ENCODE measurements at regions of chr1 and their contacts with region 1.

Region 1: DNA sequence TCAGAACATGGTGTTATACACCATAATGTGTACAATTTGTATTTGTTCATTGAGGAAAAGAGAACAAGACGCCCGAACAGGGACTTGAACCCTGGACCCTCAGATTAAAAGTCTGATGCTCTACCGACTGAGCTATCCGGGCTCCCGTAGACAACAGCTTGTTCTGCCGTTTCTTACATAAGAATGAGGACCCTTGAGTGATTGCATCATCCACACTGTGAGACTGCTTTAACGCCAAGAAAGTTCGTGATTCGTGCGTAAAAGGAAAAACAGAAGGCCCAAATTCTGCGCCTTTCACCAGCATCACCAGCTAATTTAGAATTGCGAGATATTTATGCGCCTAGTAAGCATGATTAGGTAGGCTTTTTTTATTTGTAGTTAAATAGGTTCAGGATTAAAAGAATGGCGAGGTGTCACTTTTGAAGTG is 9.2 kb upstream of the MDM4 start:
- DNase-seq: peak; percentile 94
- ATAC-seq: peak; percentile 82
- H3K4me3 Mint-ChIP-seq: peak overlapping the region; percentile 88
- H3K27ac Mint-ChIP-seq: peak overlapping the region; percentile 97
- H3K4me1 Mint-ChIP-seq: peaks cover 42% of the 10 kb centered on the region
- H3K27me3 Mint-ChIP-seq: no peaks in the 10 kb centered on the region

Region 2: DNA sequence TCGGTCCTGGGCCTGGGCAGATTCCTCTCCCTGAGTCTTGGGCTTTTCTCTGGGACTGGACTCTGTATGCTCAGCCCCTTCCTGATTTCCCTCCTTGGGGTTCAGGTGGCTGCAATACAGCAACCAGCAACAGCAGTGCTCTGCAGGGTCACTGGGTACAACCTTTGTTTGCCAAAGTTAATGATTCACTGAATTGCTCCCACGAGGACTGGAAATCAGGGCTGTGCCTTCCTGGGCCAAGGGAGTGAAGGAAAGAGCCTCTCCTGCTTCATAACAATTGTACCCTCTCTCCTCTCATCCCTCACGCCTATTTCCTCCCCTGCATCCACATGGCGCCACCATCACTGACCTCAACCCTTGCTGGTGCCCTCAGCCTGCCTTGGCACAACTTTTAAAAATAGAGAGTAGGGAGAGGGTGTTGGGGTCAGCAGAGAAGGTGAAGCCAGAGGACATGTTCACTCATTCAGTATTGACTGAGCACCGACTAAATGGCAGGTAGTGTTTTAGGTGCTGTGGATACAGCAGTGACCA is 240.4 kb before region 1 on chr1:
- CTCF ChIA-PET with region 1: no interaction called
- POLR2A ChIA-PET with region 1: no interaction called
- DNase-seq: no peak
- ATAC-seq: no peak
- H3K4me3 Mint-ChIP-seq: no peak overlapping the region
- H3K27ac Mint-ChIP-seq: no peak overlapping the region
- H3K4me1 Mint-ChIP-seq: no peaks in the 10 kb centered on the region
- H3K27me3 Mint-ChIP-seq: peaks cover 5% of the 10 kb centered on the region

Region 3: DNA sequence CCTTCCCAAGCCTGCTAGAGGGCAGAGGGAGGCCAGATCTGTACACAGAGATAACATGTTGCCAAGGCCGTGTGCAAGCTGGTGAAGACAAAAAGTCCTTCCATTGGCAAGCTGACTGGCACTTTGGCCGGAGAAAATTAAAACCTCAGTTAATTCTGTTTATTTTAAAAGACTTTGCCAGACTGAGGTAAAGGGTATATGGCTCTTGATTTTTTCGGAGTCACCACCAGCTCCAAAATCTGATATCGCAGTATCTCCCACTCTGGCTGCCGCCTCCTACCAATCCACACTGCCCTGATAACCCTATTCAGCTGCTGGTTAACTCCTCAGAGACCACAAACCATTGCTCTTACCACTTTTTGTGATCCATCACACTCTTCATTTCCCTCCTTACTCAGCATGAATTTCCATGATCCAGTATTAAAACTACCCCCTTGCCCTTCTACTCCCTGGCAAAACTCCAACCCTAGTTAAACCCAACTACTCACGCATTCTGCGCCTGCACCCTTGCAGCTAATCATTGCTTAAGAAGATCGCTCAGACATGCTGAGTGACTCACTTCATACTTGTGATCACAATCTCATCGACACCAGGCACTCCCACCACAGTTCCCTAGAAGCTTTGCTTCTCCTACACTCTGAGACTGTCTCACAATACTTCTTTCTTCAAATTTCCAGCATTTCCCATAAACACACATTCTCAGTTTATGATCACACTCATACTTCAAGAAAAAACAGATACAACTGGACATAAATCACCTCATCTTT is 89.6 kb before region 1 on chr1:
- CTCF ChIA-PET with region 1: interaction called, 11 read pairs
- POLR2A ChIA-PET with region 1: interaction called, 4 read pairs
- DNase-seq: no peak
- ATAC-seq: peak; percentile 43
- H3K4me3 Mint-ChIP-seq: no peak overlapping the region
- H3K27ac Mint-ChIP-seq: no peak overlapping the region
- H3K4me1 Mint-ChIP-seq: peaks cover 35% of the 10 kb centered on the region
- H3K27me3 Mint-ChIP-seq: no peaks in the 10 kb centered on the region

Region 4: GRCh38 chr1:204494281-204495077 is 12.5 kb before region 1 on chr1 and contains the start of gene PIK3C2B:
- CTCF ChIA-PET with region 1: interaction called, 61 read pairs
- POLR2A ChIA-PET with region 1: interaction called, 27 read pairs
- DNase-seq: peak; percentile 80
- ATAC-seq: peak; percentile 86
- H3K4me3 Mint-ChIP-seq: peak within 1 kb of the TSS; percentile 77
- H3K27ac Mint-ChIP-seq: peak within 1 kb of the TSS; percentile 89
- H3K4me1 Mint-ChIP-seq: peaks cover 58% of the 10 kb centered on the region
- H3K27me3 Mint-ChIP-seq: peaks cover 2% of the 10 kb centered on the region
- total RNA-seq, gene PIK3C2B: 26.2 to 28.4 TPM

Region 5: GRCh38 chr1:204544321-204544720 is 37.3 kb after region 1 on chr1:
- CTCF ChIA-PET with region 1: interaction called, 12 read pairs
- POLR2A ChIA-PET with region 1: interaction called, 8 read pairs
- DNase-seq: no peak
- ATAC-seq: peak; percentile 87
- H3K4me3 Mint-ChIP-seq: peak overlapping the region; percentile 23
- H3K27ac Mint-ChIP-seq: peak overlapping the region; percentile 83
- H3K4me1 Mint-ChIP-seq: peaks cover 55% of the 10 kb centered on the region
- H3K27me3 Mint-ChIP-seq: no peaks in the 10 kb centered on the region

Region 6: GRCh38 chr1:204730826-204731459 is 224.0 kb after region 1 on chr1:
- CTCF ChIA-PET with region 1: no interaction called
- POLR2A ChIA-PET with region 1: no interaction called
- DNase-seq: no peak
- ATAC-seq: no peak
- H3K4me3 Mint-ChIP-seq: no peak overlapping the region
- H3K27ac Mint-ChIP-seq: no peak overlapping the region
- H3K4me1 Mint-ChIP-seq: no peaks in the 10 kb centered on the region
- H3K27me3 Mint-ChIP-seq: peaks cover 25% of the 10 kb centered on the region